T-cell (primary cell): ENCODE measurements at regions of chr9 and their contacts with region 1.

Region 1: GRCh38 chr9:23492126-23493002 is 333.7 kb downstream of the ELAVL2 start:
- DNase-seq: no peak
- ATAC-seq: no peak
- H3K4me3 ChIP-seq: no peak overlapping the region
- H3K4me3 Mint-ChIP-seq: no peak overlapping the region
- H3K27ac ChIP-seq: no peak overlapping the region
- H3K27ac Mint-ChIP-seq: no peak overlapping the region
- H3K4me1 ChIP-seq: no peaks in the 10 kb centered on the region
- H3K4me1 Mint-ChIP-seq: no peaks in the 10 kb centered on the region
- H3K27me3 ChIP-seq: no peaks in the 10 kb centered on the region
- H3K27me3 Mint-ChIP-seq: no peaks in the 10 kb centered on the region

Region 2: GRCh38 chr9:23477908-23478307 is 14.5 kb before region 1 on chr9:
- CTCF ChIA-PET with region 1: no interaction called
- POLR2A ChIA-PET with region 1: no interaction called
- DNase-seq: no peak
- ATAC-seq: no peak
- H3K4me3 ChIP-seq: no peak overlapping the region
- H3K4me3 Mint-ChIP-seq: no peak overlapping the region
- H3K27ac ChIP-seq: no peak overlapping the region
- H3K27ac Mint-ChIP-seq: no peak overlapping the region
- H3K4me1 ChIP-seq: no peaks in the 10 kb centered on the region
- H3K4me1 Mint-ChIP-seq: no peaks in the 10 kb centered on the region
- H3K27me3 ChIP-seq: no peaks in the 10 kb centered on the region
- H3K27me3 Mint-ChIP-seq: no peaks in the 10 kb centered on the region

Region 3: DNA sequence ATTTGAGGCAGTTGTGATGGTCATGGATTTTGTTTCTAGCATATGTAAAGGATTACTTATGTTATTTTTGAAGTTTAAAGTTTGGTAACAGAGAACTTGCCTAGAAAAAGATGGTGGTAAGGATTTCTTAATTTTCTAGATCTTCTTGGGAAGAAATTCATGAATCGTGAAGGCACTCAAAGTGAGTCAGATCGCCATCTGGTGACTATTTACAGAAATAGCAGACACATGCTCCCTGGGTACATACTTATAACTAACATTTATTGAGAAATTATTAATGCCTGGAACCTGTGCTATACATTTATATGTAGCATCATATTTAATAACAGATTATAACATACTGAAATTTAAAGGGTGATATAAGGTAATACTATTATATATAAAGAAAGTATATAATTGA is 753.6 kb after region 1 on chr9:
- CTCF ChIA-PET with region 1: interaction called in 1 of 2 experiments, 11 read pairs
- POLR2A ChIA-PET with region 1: no interaction called
- DNase-seq: no peak
- ATAC-seq: no peak
- H3K4me3 ChIP-seq: no peak overlapping the region
- H3K4me3 Mint-ChIP-seq: no peak overlapping the region
- H3K27ac ChIP-seq: no peak overlapping the region
- H3K27ac Mint-ChIP-seq: no peak overlapping the region
- H3K4me1 ChIP-seq: no peaks in the 10 kb centered on the region
- H3K4me1 Mint-ChIP-seq: no peaks in the 10 kb centered on the region
- H3K27me3 ChIP-seq: no peaks in the 10 kb centered on the region
- H3K27me3 Mint-ChIP-seq: no peaks in the 10 kb centered on the region